Mammary epithelial cell (primary cell): ENCODE measurements at regions of chrX and their contacts with region 1.

Region 1: GRCh38 chrX:140141444-140142029 is 176.2 kb upstream of the CXorf66 start:
- DNase-seq: peak; percentile 8
- H3K4me3 ChIP-seq: no peak overlapping the region
- H3K27ac ChIP-seq: no peak overlapping the region
- H3K4me1 ChIP-seq: no peaks in the 10 kb centered on the region
- H3K27me3 ChIP-seq: no peaks in the 10 kb centered on the region
- CTCF ChIP-seq: peak; percentile 58 to 70

Region 2: GRCh38 chrX:139811942-139812629 is 329.5 kb before region 1 on chrX:
- CTCF ChIA-PET with region 1: no interaction called
- dilution Hi-C with region 1: no loop called
- in situ Hi-C with region 1: no loop called
- intact Hi-C with region 1: no loop called
- DNase-seq: no peak
- H3K4me3 ChIP-seq: no peak overlapping the region
- H3K27ac ChIP-seq: no peak overlapping the region
- H3K4me1 ChIP-seq: no peaks in the 10 kb centered on the region
- H3K27me3 ChIP-seq: no peaks in the 10 kb centered on the region
- CTCF ChIP-seq: no peak

Region 3: DNA sequence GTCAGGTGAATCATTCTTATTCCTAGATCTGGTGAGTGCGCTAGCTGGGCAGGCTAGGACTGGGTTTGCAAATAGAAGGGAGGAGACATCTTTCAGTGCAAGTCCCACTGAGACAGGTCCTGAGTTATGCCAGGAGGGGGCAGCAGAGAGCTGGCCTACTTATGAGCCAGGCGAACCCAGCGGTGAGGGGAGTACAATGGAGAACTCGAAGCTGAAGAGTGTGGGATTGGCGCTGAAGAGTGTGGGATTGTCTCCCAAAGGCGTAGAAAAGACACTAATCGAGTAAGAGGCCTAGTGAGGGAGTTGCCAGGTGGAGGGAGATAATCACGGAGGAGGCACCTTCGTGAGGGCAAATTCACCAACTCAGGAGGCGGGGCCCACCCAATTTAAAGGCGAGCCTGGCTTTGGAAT is 84.5 kb before region 1 on chrX:
- CTCF ChIA-PET with region 1: no interaction called
- dilution Hi-C with region 1: no loop called
- in situ Hi-C with region 1: no loop called
- intact Hi-C with region 1: loop called (anchors 1 kb)
- DNase-seq: peak; percentile 57
- H3K4me3 ChIP-seq: no peak overlapping the region
- H3K27ac ChIP-seq: no peak overlapping the region
- H3K4me1 ChIP-seq: no peaks in the 10 kb centered on the region
- H3K27me3 ChIP-seq: no peaks in the 10 kb centered on the region
- CTCF ChIP-seq: peak; percentile 74 to 91

Region 4: DNA sequence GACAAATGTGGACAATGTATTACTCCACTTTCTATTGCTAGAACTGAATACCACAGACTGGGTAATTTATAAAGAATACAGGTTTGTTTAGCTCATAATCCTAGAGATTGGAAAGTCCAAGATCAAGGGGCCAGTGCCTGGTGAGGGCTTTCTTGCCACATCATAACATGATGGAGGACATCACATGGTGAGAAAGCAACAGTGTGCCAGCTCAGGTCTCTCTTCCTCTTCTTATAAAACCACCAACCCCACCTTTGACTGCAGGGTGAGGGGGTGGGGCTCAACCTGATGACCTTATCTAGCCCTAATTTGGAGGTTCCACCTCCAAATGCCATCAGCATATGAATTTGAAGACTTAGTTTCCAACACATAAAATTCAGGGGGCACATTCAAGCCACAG is 70.5 kb before region 1 on chrX:
- CTCF ChIA-PET with region 1: no interaction called
- dilution Hi-C with region 1: no loop called
- in situ Hi-C with region 1: loop called in 1 of 2 experiments (anchors 10 kb)
- intact Hi-C with region 1: loop called (anchors 5 kb)
- DNase-seq: no peak
- H3K4me3 ChIP-seq: no peak overlapping the region
- H3K27ac ChIP-seq: no peak overlapping the region
- H3K4me1 ChIP-seq: no peaks in the 10 kb centered on the region
- H3K27me3 ChIP-seq: no peaks in the 10 kb centered on the region
- CTCF ChIP-seq: no peak